ENCODE measurements at regions of chr2 and their contacts with region 1.

Region 1: GRCh38 chr2:33372940-33373553 is 103.4 kb upstream of the RASGRP3 start:
- DNase-seq: no peak

Region 2: DNA sequence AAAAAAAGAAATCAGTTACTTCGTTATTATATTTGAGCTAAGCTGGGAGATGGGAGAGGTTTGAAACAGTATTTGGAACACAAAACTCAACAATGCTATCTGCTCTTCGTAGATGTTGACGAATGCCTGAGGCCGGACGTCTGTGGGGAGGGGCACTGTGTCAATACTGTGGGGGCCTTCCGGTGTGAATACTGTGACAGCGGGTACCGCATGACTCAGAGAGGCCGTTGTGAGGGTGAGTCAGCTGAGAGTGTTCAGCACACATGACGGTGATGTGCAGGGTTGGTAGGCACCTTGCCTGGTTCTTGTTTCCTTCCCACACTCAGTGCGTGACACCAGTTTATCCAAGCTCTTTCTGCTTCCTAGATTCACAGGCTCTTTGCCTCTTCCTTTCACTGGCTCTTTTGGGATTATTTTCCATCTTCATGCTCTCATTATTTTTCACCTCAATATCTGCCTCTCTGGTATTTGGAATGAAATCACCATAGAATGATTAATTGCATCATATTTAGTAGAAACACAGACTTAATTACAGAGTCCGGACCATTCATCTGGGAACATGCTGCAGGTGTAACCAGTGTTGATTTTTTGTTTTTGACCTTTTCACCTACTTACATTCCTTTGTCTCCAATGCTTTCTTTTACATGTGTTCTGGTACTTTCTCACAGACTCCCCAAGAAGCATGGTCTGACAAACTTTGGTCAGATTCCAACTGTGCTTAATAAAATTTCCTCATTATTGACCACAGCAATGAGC is 97.2 kb before region 1 on chr2:
- intact Hi-C with region 1: loop called (anchors 10 kb)
- DNase-seq: peak in 7 of 10 donors; percentile 23 to 87 (median 43)

Region 3: GRCh38 chr2:33291278-33292013 is 81.6 kb before region 1 on chr2:
- intact Hi-C with region 1: no loop called
- DNase-seq: no peak

Region 4: GRCh38 chr2:33406622-33407021 is 33.6 kb after region 1 on chr2:
- intact Hi-C with region 1: no loop called
- DNase-seq: no peak

Measured in posterior cingulate gyrus (tissue), 11 donors.